Endothelial cell of umbilical vein (primary cell): ENCODE measurements at regions of chr2 and their contacts with region 1.

Region 1: GRCh38 chr2:71068218-71069035 is at the start of gene NAGK:
- DNase-seq: peak; percentile 97
- H3K4me3 ChIP-seq: peak within 1 kb of the TSS; percentile 67 to 77 (median 72)
- H3K27ac ChIP-seq: peak within 1 kb of the TSS; percentile 69
- H3K4me1 ChIP-seq: peaks cover 27% of the 10 kb centered on the region
- H3K27me3 ChIP-seq: peaks cover 3 to 9% of the 10 kb centered on the region in 2 experiments
- CTCF ChIP-seq: no peak
- POLR2A ChIP-seq: peak; percentile 97
- total RNA-seq, gene NAGK: 125 and 130 TPM in 2 replicates

Region 2: GRCh38 chr2:71226965-71227560 is 158.6 kb after region 1 on chr2 and contains the start of gene PAIP2B:
- CTCF ChIA-PET with region 1: no interaction called
- POLR2A ChIA-PET with region 1: no interaction called
- dilution Hi-C with region 1: no loop called
- intact Hi-C with region 1: loop called (anchors 5 kb)
- DNase-seq: peak; percentile 100
- H3K4me3 ChIP-seq: peak within 1 kb of the TSS; percentile 46 to 59 (median 52)
- H3K27ac ChIP-seq: no peak within 1 kb of the TSS
- H3K4me1 ChIP-seq: peaks cover 10% of the 10 kb centered on the region
- H3K27me3 ChIP-seq: peaks cover 13 to 26% of the 10 kb centered on the region in 2 experiments
- CTCF ChIP-seq: no peak
- POLR2A ChIP-seq: no peak
- total RNA-seq, gene PAIP2B: 0.58 and 0.62 TPM in 2 replicates